ENCODE measurements at regions of chr4 and their contacts with region 1.

Region 1: DNA sequence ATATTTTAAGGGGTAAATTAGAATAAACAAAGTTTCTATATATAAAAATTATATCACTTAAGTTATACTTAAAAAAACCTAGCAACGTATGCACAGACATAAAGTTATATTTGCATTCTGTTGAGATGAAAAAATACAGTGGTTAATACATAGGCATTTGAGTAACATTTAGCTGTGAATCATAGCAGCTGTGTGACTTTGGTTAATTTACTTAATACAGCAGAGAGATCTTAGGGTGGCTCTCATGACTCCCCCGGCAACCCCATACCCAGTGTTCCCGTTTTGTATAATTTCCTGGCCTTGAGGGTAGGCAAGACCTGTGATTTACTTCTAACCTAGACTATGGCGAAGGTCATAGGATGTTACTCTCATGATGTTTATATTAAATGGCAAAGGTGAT is 504.8 kb downstream of the INPP4B start:
- DNase-seq: no peak
- H3K4me3 ChIP-seq: no peak overlapping the region
- H3K27ac ChIP-seq: no peak overlapping the region
- H3K4me1 ChIP-seq: no peaks in the 10 kb centered on the region
- H3K27me3 ChIP-seq: no peaks in the 10 kb centered on the region
- CTCF ChIP-seq: no peak
- POLR2A ChIP-seq: no peak

Region 2: GRCh38 chr4:143506031-143506430 is 1164.8 kb after region 1 on chr4:
- intact Hi-C with region 1: loop called (anchors 5 kb)
- DNase-seq: no peak
- H3K4me3 ChIP-seq: no peak overlapping the region
- H3K27ac ChIP-seq: no peak overlapping the region
- H3K4me1 ChIP-seq: no peaks in the 10 kb centered on the region
- H3K27me3 ChIP-seq: no peaks in the 10 kb centered on the region
- CTCF ChIP-seq: no peak
- POLR2A ChIP-seq: no peak

Measured in vagina (tissue), 2 donors.